HepG2 (cell line): ENCODE measurements at regions of chr16 and their contacts with region 1.

Region 1: GRCh38 chr16:73068541-73069401 is 20.8 kb upstream of the ZFHX3 start:
- DNase-seq: peak; percentile 63
- ATAC-seq: no peak
- H3K4me3 ChIP-seq: no peak overlapping the region
- H3K27ac ChIP-seq: no peak overlapping the region
- H3K4me1 ChIP-seq: peaks cover 70% of the 10 kb centered on the region
- H3K27me3 ChIP-seq: peaks cover 0 to 17% of the 10 kb centered on the region in 2 experiments; a peak in 2 of 5 replicates
- CTCF ChIP-seq: no peak
- EP300 ChIP-seq: no peak
- POLR2A ChIP-seq: no peak
- RAD21 ChIP-seq: no peak

Region 2: DNA sequence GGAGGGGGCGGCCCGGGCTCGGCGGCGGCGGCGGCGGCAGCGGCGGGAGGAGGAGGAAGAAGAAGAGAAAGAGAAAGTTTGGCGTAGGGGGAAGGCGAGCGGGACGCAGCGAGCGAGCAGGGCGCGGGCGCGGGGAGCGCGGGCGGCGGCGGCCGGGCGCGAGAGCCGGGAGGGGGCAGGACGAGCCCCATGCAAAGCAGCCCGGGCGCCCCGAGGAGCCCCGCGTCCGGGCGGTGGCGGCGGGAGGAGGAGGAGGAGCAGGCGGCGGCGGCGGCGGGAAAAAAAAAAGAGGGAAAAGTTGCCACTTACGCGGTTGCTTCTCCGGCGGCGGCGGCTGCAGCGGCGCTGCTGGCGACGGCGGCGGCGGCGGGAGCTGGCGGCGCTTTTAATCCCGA is 10.6 kb before region 1 on chr16:
- CTCF ChIA-PET with region 1: no interaction called
- POLR2A ChIA-PET with region 1: interaction called, 16 read pairs
- in situ Hi-C with region 1: no loop called
- intact Hi-C with region 1: loop called (anchors 2 kb)
- DNase-seq: no peak
- ATAC-seq: no peak
- H3K4me3 ChIP-seq: peak overlapping the region; percentile 75 to 78 (median 77); a peak in 4 of 6 replicates
- H3K27ac ChIP-seq: peak overlapping the region; percentile 57
- H3K4me1 ChIP-seq: peaks cover 53% of the 10 kb centered on the region
- H3K27me3 ChIP-seq: no peaks in the 10 kb centered on the region
- CTCF ChIP-seq: no peak
- EP300 ChIP-seq: no peak
- POLR2A ChIP-seq: no peak
- RAD21 ChIP-seq: peak; percentile 26; the same call in 1 of the 2 replicates

Region 3: GRCh38 chr16:73143576-73144422 is 75.0 kb after region 1 on chr16:
- CTCF ChIA-PET with region 1: no interaction called
- POLR2A ChIA-PET with region 1: no interaction called
- in situ Hi-C with region 1: no loop called
- intact Hi-C with region 1: loop called (anchors 1 kb)
- DNase-seq: no peak
- ATAC-seq: peak; percentile 30; the same call in 1 of the 3 replicates
- H3K4me3 ChIP-seq: peak overlapping the region in 1 of 3 experiments; percentile 19; a peak in 1 of 6 replicates
- H3K27ac ChIP-seq: no peak overlapping the region
- H3K4me1 ChIP-seq: peaks cover 40% of the 10 kb centered on the region
- H3K27me3 ChIP-seq: peaks cover 0 to 45% of the 10 kb centered on the region in 2 experiments; a peak in 3 of 5 replicates
- CTCF ChIP-seq: no peak
- EP300 ChIP-seq: no peak
- POLR2A ChIP-seq: no peak
- RAD21 ChIP-seq: no peak

Region 4: DNA sequence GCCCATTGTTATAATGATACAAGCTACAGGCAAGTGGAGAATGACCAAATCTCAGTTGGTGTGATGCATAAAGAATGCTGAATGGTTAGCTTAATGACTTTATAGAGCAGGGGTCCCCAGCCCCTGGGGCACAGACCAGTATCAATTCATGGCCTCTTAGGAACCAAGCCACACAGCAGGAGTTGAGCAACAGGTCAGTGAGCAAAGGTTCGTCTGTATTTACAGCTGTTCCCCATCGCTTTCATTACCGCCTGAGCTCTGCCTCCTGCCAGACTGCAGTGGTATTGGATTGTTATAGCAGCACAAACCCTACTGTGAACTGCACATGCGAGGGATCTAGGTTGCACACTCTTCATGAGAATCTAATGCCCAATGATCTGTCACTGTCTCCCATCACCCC is 93.2 kb after region 1 on chr16:
- CTCF ChIA-PET with region 1: no interaction called
- POLR2A ChIA-PET with region 1: no interaction called
- in situ Hi-C with region 1: no loop called
- intact Hi-C with region 1: loop called (anchors 5 kb)
- DNase-seq: peak; percentile 78
- ATAC-seq: no peak; the same call in 1 of the 3 replicates
- H3K4me3 ChIP-seq: no peak overlapping the region
- H3K27ac ChIP-seq: no peak overlapping the region
- H3K4me1 ChIP-seq: peaks cover 9% of the 10 kb centered on the region
- H3K27me3 ChIP-seq: no peaks in the 10 kb centered on the region
- CTCF ChIP-seq: peak; percentile 60
- EP300 ChIP-seq: peak in 1 of 2 experiments; percentile 42; a peak in 1 of 4 replicates
- POLR2A ChIP-seq: no peak
- RAD21 ChIP-seq: peak; percentile 32; the same call in 1 of the 2 replicates

Region 5: DNA sequence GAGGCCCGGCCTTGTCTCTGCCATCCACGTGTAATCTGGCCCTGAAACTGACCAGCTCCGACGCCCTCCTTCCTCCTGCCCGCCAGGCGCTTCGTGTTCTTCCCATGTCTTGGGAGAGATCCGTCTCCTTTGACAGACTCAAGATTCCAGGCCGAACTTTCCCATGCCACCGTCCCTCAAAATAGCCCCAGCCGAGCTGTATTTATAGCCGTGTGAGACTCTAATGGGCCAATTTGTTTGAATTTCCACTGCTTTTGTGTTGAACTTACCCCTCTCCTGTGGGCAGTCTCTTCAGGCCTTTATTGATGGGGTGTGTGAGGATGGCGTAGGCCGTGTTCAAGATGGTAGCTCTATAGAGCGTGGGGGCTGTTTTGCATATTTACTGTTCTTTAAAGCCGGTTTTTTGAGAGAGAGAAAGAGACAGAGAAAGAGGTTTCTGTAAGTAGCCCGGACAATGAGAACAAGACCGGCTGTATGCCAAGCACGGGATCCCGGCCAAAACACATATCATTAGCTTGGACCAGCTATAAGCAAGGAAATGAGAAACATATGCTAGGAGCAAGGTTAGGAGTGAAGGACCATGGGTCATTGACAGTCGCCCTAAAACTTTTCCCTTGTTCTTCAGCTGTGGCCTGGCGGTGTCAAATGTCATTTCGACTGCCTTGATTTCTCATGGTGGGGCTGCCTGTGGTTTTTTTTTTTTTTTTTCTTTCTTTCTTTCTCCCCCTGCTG is 103.6 kb after region 1 on chr16:
- CTCF ChIA-PET with region 1: no interaction called
- POLR2A ChIA-PET with region 1: no interaction called
- in situ Hi-C with region 1: loop called (anchors 10 kb)
- intact Hi-C with region 1: no loop called
- DNase-seq: no peak
- ATAC-seq: peak; percentile 49
- H3K4me3 ChIP-seq: no peak overlapping the region
- H3K27ac ChIP-seq: no peak overlapping the region
- H3K4me1 ChIP-seq: peaks cover 6% of the 10 kb centered on the region; the same call in 1 of the 2 replicates
- H3K27me3 ChIP-seq: peaks cover 0 to 6% of the 10 kb centered on the region in 2 experiments; a peak in 1 of 5 replicates
- CTCF ChIP-seq: 0 out of 2 replicates have a peak, but pooled peaks have one; percentile 3
- EP300 ChIP-seq: no peak
- POLR2A ChIP-seq: no peak
- RAD21 ChIP-seq: no peak

Region 6: GRCh38 chr16:73196670-73197069 is 127.9 kb after region 1 on chr16:
- CTCF ChIA-PET with region 1: no interaction called
- POLR2A ChIA-PET with region 1: no interaction called
- in situ Hi-C with region 1: no loop called
- intact Hi-C with region 1: loop called (anchors 5 kb)
- DNase-seq: peak; percentile 70
- ATAC-seq: peak; percentile 99
- H3K4me3 ChIP-seq: no peak overlapping the region
- H3K27ac ChIP-seq: no peak overlapping the region
- H3K4me1 ChIP-seq: peaks cover 5% of the 10 kb centered on the region
- H3K27me3 ChIP-seq: peaks cover 0 to 16% of the 10 kb centered on the region in 2 experiments; a peak in 1 of 5 replicates
- CTCF ChIP-seq: peak; percentile 95
- EP300 ChIP-seq: no peak
- POLR2A ChIP-seq: no peak
- RAD21 ChIP-seq: peak; percentile 85